Panc1 (cell line): ENCODE measurements at regions of chr15 and their contacts with region 1.

Region 1: GRCh38 chr15:85330901-85331588 is 49.4 kb upstream of the AKAP13 start:
- DNase-seq: peak; percentile 89
- ATAC-seq: peak; percentile 90
- H3K4me3 ChIP-seq: peak overlapping the region; percentile 8 to 66; a peak in 3 of 4 replicates
- H3K27ac ChIP-seq: peak overlapping the region; percentile 92
- H3K4me1 ChIP-seq: peaks cover 37% of the 10 kb centered on the region
- H3K27me3 ChIP-seq: no peaks in the 10 kb centered on the region
- CTCF ChIP-seq: peak; percentile 99

Region 2: DNA sequence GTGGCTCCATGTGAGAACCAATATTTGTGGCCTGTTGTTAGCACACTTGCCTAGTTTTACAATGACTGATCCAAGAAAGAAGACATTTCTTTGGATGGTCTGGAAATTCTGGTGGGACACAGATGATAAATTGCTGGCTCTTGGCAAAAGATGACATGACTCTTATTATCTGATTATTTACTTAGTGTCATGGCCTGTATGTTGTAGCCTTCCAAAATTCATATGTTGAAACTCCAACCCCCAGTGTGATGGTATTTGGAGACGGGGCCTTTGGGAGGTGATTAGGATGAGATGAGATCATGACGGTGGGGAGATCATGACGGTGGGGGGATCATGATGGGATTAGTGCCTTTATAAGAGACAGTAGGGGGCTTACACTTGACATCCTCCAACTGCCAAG is 19.4 kb after region 1 on chr15:
- CTCF ChIA-PET with region 1: no interaction called
- POLR2A ChIA-PET with region 1: no interaction called
- in situ Hi-C with region 1: no loop called
- intact Hi-C with region 1: no loop called
- DNase-seq: no peak
- ATAC-seq: no peak
- H3K4me3 ChIP-seq: no peak overlapping the region
- H3K27ac ChIP-seq: no peak overlapping the region
- H3K4me1 ChIP-seq: peaks cover 9% of the 10 kb centered on the region
- H3K27me3 ChIP-seq: no peaks in the 10 kb centered on the region
- CTCF ChIP-seq: no peak

Region 3: GRCh38 chr15:85412956-85413854 is 82.2 kb after region 1 on chr15:
- CTCF ChIA-PET with region 1: interaction called, 26 read pairs
- POLR2A ChIA-PET with region 1: interaction called, 5 read pairs
- in situ Hi-C with region 1: no loop called
- intact Hi-C with region 1: loop called (anchors 2 kb)
- DNase-seq: peak; percentile 97
- ATAC-seq: peak; percentile 97
- H3K4me3 ChIP-seq: peak overlapping the region; percentile 27 to 54
- H3K27ac ChIP-seq: peak overlapping the region; percentile 95
- H3K4me1 ChIP-seq: peaks cover 60% of the 10 kb centered on the region
- H3K27me3 ChIP-seq: no peaks in the 10 kb centered on the region
- CTCF ChIP-seq: no peak

Region 4: DNA sequence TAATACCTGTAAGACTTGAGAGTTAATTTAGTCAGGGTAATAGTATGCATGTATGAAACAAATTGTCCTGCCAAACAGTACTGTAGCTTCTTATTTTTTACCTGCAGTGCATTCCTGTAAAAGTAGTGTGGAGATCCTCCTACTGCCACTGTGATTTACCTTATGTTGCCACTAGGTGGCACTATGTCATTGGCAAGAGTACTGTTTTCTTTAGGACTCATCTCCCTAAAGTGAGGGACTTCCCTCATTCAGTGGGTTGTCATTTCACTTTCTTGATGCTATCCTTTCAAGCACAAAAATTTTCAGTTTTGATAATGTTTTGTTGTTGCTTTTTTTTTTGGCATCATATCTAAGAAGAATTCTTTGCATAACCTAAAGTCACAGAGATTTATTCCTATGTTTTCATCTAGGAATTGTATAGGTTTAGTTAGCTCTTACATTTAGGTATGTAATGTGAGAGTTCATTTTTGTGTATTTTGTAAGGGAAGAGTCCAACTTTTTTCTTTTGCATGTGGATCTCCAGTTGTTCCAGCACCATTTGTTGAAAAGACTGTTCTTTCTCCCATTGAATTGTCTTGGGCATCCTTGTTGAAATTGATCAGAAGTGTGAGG is 155.0 kb after region 1 on chr15:
- CTCF ChIA-PET with region 1: interaction called, 12 read pairs
- POLR2A ChIA-PET with region 1: no interaction called
- in situ Hi-C with region 1: no loop called
- intact Hi-C with region 1: loop called (anchors 5 kb)
- DNase-seq: peak; percentile 69
- ATAC-seq: peak; percentile 82
- H3K4me3 ChIP-seq: no peak overlapping the region
- H3K27ac ChIP-seq: no peak overlapping the region
- H3K4me1 ChIP-seq: peaks cover 29% of the 10 kb centered on the region
- H3K27me3 ChIP-seq: no peaks in the 10 kb centered on the region
- CTCF ChIP-seq: peak; percentile 84; the same call in 1 of the 2 replicates